Gastrocnemius medialis (tissue), 4 donors: ENCODE measurements at regions of chr11 and their contacts with region 1.

Region 1: GRCh38 chr11:19394525-19395016 is 153.8 kb upstream of the E2F8 start:
- DNase-seq: no peak
- ATAC-seq: no peak
- H3K4me3 ChIP-seq: no peak overlapping the region
- H3K27ac ChIP-seq: no peak overlapping the region
- H3K4me1 ChIP-seq: no peaks in the 10 kb centered on the region
- H3K27me3 ChIP-seq: no peaks in the 10 kb centered on the region
- CTCF ChIP-seq: no peak
- POLR2A ChIP-seq: no peak

Region 2: DNA sequence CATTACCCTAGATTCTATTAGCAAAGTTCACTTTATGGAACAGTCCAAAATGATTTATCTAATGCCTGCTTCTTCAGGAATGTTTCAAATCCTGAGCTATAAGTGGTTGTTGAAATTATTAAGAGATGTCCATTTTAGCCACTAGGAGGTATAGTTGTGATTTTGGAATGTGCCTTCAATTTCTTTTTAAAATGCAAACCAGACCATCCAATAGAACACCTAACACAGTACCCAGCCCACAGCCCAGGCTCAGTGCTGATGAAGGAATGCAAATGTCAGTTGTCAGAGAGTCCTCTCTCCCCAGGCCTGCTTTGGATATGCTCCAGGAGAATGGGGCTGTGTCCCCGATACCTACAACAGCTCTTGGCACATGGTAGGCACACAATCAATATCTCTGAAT is 68.1 kb before region 1 on chr11:
- in situ Hi-C with region 1: no loop called
- intact Hi-C with region 1: no loop called
- DNase-seq: no peak
- ATAC-seq: no peak
- H3K4me3 ChIP-seq: no peak overlapping the region
- H3K27ac ChIP-seq: no peak overlapping the region
- H3K4me1 ChIP-seq: peaks cover 0 to 5% of the 10 kb centered on the region in 2 donors
- H3K27me3 ChIP-seq: no peaks in the 10 kb centered on the region
- CTCF ChIP-seq: peak in 1 of 5 experiments; percentile 14
- POLR2A ChIP-seq: no peak

Region 3: DNA sequence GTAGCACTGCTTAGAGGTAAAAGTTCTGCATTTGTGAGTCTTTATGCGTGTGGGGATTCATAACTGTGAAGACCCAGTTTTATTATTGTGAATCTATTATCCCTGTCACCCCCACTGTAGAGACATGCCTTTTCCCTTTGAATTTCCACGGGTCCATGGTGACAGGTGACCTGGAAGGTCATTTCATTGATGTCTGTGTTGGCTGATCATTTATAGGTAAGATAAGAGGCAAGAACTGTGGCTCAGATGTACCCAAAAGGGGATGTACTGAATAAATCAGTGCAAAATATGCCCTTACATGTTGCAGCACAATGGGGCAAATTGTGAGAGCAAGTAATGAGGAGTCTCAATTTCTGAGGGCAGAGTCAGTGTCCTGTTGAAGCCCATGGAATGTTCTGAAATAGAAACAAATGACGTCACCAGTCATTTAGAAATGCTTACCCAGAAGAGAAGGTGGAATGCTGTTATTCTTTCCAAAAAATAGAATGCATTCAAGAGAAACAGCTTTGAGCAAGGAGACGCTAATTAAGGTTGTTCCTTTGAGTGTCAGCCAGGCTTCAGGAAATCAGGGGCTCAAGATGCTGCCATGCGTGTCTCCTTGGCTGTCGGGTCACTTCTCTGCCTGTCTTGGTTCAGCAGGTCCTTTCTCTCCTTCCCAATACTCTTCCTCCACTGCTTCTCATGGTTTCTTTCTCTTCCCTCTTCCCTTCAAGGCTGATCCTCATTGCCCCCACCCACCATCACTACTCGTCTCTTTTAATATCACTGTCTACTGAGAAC is 35.2 kb before region 1 on chr11:
- in situ Hi-C with region 1: no loop called
- intact Hi-C with region 1: no loop called
- DNase-seq: no peak
- ATAC-seq: no peak
- H3K4me3 ChIP-seq: no peak overlapping the region
- H3K27ac ChIP-seq: no peak overlapping the region
- H3K4me1 ChIP-seq: no peaks in the 10 kb centered on the region
- H3K27me3 ChIP-seq: peaks cover 0 to 9% (median 4%) of the 10 kb centered on the region in 3 donors
- CTCF ChIP-seq: no peak
- POLR2A ChIP-seq: no peak

Region 4: GRCh38 chr11:19472679-19473078 is 78.1 kb after region 1 on chr11:
- in situ Hi-C with region 1: no loop called
- intact Hi-C with region 1: loop called (anchors 2 kb)
- DNase-seq: no peak
- ATAC-seq: no peak
- H3K4me3 ChIP-seq: no peak overlapping the region
- H3K27ac ChIP-seq: no peak overlapping the region
- H3K4me1 ChIP-seq: no peaks in the 10 kb centered on the region
- H3K27me3 ChIP-seq: peaks cover 0 to 5% (median 0%) of the 10 kb centered on the region in 3 donors
- CTCF ChIP-seq: no peak
- POLR2A ChIP-seq: no peak